ENCODE measurements at regions of chrX and their contacts with region 1.

Region 1: DNA sequence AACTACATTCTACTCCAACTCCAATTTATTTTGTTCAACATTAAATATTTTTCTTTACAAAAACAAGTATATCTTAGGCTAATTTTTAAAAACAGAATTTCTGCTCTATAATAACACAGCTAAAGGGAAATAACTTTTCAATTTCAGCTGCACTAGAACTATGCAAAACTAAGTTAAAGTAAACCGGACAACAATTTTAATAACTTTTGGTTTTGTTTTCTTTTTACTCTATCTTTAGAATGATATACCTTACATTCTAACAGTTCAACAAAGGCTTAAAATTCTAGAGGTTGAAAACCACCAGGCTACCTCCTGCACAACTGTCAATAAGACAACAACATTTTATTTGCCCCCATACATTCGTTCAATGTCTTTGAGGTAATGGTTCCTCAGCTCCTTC is 18.7 kb upstream of the KCNE5 start:
- DNase-seq: no peak
- ATAC-seq: no peak
- H3K4me3 ChIP-seq: no peak overlapping the region
- H3K4me3 Mint-ChIP-seq: no peak overlapping the region
- H3K27ac ChIP-seq: no peak overlapping the region
- H3K27ac Mint-ChIP-seq: no peak overlapping the region
- H3K4me1 ChIP-seq: no peaks in the 10 kb centered on the region
- H3K4me1 Mint-ChIP-seq: peaks cover 0 to 13% (median 6%) of the 10 kb centered on the region in 7 donors
- H3K27me3 ChIP-seq: no peaks in the 10 kb centered on the region
- H3K27me3 Mint-ChIP-seq: no peaks in the 10 kb centered on the region

Region 2: DNA sequence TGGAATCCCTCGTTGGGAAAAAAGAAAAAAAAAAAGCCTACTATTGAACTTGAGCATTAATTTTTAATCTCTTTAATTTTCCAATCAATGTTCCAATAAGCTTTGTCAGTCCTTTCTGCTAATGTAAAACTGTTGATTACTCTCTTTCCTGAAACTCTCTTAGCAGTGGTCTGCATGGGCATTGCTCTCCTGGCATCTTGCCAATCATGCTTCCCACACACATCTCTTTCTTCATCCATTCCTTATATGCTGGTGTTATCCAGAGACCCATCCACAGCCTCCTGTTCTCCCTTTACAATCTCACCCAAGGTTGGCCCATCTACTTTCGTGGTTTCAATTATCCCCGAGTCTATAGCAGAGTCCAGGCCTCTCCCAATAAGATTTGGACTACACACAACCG is 13.1 kb after region 1 on chrX:
- CTCF ChIA-PET with region 1: no interaction called
- POLR2A ChIA-PET with region 1: no interaction called
- intact Hi-C with region 1: loop called in 1 of 2 experiments (anchors 1 kb)
- DNase-seq: no peak
- ATAC-seq: no peak
- H3K4me3 ChIP-seq: no peak overlapping the region
- H3K4me3 Mint-ChIP-seq: no peak overlapping the region
- H3K27ac ChIP-seq: no peak overlapping the region
- H3K27ac Mint-ChIP-seq: no peak overlapping the region
- H3K4me1 ChIP-seq: no peaks in the 10 kb centered on the region
- H3K4me1 Mint-ChIP-seq: peaks cover 0 to 15% (median 0%) of the 10 kb centered on the region in 7 donors
- H3K27me3 ChIP-seq: no peaks in the 10 kb centered on the region
- H3K27me3 Mint-ChIP-seq: no peaks in the 10 kb centered on the region

Measured in naive thymus-derived CD4-positive, alpha-beta T cell (primary cell).